Activated B cell treated with CpG ODN at 0.5 μM for 24 hours (primary cell): ENCODE measurements at regions of chr12 and their contacts with region 1.

Region 1: GRCh38 chr12:89862511-89863179 is 154.0 kb upstream of the ATP2B1 start:
- DNase-seq: peak; percentile 30
- ATAC-seq: peak; percentile 76
- H3K4me3 Mint-ChIP-seq: peak overlapping the region; percentile 81
- H3K27ac Mint-ChIP-seq: peak overlapping the region; percentile 96
- H3K4me1 Mint-ChIP-seq: peaks cover 73% of the 10 kb centered on the region
- H3K27me3 Mint-ChIP-seq: no peaks in the 10 kb centered on the region
- CTCF ChIP-seq: no peak

Region 2: DNA sequence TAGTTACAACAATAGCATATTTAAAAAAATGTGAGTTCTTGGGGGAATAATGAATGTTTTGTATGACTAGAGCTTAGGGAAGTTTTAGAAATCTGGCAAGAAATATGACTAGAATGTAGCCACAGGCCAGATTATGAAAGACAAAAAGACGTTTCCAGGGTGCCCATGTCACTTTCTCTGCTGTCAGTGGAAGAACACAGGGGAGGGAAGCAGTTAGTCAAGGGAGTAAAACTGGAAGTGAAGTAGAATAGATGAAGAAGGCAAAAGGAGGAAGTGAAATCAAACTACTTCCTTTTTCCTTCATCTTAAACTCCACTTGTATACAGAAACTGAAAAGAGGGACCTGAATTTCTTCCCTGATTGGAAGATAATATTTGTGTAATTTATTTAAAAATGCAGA is 72.8 kb before region 1 on chr12:
- CTCF ChIA-PET with region 1: no interaction called
- POLR2A ChIA-PET with region 1: no interaction called
- intact Hi-C with region 1: loop called (anchors 2 kb)
- DNase-seq: no peak
- ATAC-seq: peak; percentile 97
- H3K4me3 Mint-ChIP-seq: peak overlapping the region; percentile 67
- H3K27ac Mint-ChIP-seq: peak overlapping the region; percentile 87
- H3K4me1 Mint-ChIP-seq: peaks cover 20% of the 10 kb centered on the region
- H3K27me3 Mint-ChIP-seq: no peaks in the 10 kb centered on the region
- CTCF ChIP-seq: no peak

Region 3: GRCh38 chr12:89873745-89874144 is 11.1 kb after region 1 on chr12:
- CTCF ChIA-PET with region 1: interaction called, 4 read pairs
- POLR2A ChIA-PET with region 1: interaction called, 3 read pairs
- intact Hi-C with region 1: loop called (anchors 1 kb)
- DNase-seq: no peak
- ATAC-seq: peak; percentile 56
- H3K4me3 Mint-ChIP-seq: no peak overlapping the region
- H3K27ac Mint-ChIP-seq: no peak overlapping the region
- H3K4me1 Mint-ChIP-seq: peaks cover 51% of the 10 kb centered on the region
- H3K27me3 Mint-ChIP-seq: no peaks in the 10 kb centered on the region
- CTCF ChIP-seq: no peak